Heart left ventricle (tissue), 16 donors: ENCODE measurements at regions of chr2 and their contacts with region 1.

Region 1: DNA sequence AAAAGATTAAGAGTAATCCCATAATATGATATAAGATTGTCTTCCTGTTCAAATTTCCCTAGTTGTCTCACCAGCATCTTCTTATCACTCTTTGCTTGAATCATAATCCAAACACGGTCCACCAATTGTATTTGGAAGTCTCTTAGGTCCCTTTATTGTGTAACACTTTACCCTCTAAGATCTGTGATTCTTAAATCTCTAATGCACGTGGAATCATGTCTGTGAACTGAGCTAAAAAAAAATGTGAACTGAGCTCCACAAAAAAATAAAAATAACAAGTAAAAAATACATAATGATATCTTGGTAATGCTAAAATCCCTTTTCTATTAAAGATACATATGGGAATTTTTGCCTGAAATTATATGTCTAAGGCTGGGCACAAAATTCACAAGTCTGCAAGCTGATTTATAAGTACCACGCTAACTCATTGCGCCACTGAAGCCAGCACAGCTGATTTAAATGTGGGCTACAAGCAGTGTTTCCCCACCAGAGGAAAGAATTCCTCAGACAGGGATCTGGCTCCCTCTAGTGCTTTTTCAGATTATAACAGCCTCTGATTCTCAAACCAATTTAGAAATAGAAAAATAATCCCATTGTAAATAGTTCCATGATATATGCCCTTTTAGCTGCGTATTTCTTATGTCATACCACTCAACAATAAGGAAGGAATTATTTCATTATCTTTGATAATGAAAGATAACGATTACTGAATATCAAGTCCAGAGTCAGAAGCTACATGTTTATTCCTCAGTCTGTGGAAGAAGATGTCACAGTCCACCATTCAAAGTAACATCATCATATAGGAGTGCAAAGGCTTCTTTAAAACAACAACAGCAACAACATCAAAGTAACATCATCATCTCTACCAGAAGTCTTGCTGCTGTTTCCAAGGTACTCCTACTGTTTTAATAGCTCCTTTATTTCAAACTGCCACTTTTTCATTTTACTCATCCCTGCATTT is 22.9 kb downstream of the RBM43 start:
- DNase-seq: peak in 4 of 5 donors; percentile 23 to 51 (median 38)
- ATAC-seq: peak in 3 of 4 donors; percentile 70 to 90 (median 70)
- H3K4me3 ChIP-seq: no peak overlapping the region
- H3K27ac ChIP-seq: no peak overlapping the region
- H3K4me1 ChIP-seq: peaks cover 0 to 5% (median 0%) of the 10 kb centered on the region in 12 donors
- H3K27me3 ChIP-seq: no peaks in the 10 kb centered on the region
- CTCF ChIP-seq: peak; percentile 79 to 93 (median 87)
- POLR2A ChIP-seq: no peak

Region 2: GRCh38 chr2:149597668-149598326 is 1641.0 kb before region 1 on chr2:
- intact Hi-C with region 1: loop called (anchors 1 to 5 kb)
- DNase-seq: peak in 2 of 5 donors; percentile 16 to 23
- ATAC-seq: peak; percentile 73 to 97 (median 92)
- H3K4me3 ChIP-seq: peak overlapping the region in 9 of 12 donors; percentile 20 to 53 (median 33)
- H3K27ac ChIP-seq: no peak overlapping the region
- H3K4me1 ChIP-seq: peaks cover 0 to 11% (median 0%) of the 10 kb centered on the region in 12 donors
- H3K27me3 ChIP-seq: no peaks in the 10 kb centered on the region
- CTCF ChIP-seq: peak; percentile 67 to 88 (median 78)
- POLR2A ChIP-seq: no peak